GM12878 (cell line): ENCODE measurements at regions of chr5 and their contacts with region 1.

Region 1: GRCh38 chr5:103358305-103358995 is 99.9 kb downstream of the MACIR start:
- DNase-seq: no peak
- ATAC-seq: no peak
- H3K4me3 ChIP-seq: no peak overlapping the region
- H3K27ac ChIP-seq: no peak overlapping the region
- H3K4me1 ChIP-seq: peaks cover 11% of the 10 kb centered on the region; the same call in 1 of the 2 replicates
- H3K27me3 ChIP-seq: no peaks in the 10 kb centered on the region
- CTCF ChIP-seq: no peak
- EP300 ChIP-seq: no peak
- POLR2A ChIP-seq: no peak
- RAD21 ChIP-seq: no peak

Region 2: GRCh38 chr5:103346162-103346748 is 12.2 kb before region 1 on chr5:
- CTCF ChIA-PET with region 1: interaction called, 8 read pairs
- POLR2A ChIA-PET with region 1: interaction called, 3 read pairs
- RAD21 ChIA-PET with region 1: interaction called, 3 read pairs
- SMC1A ChIA-PET with region 1: interaction called, 10 read pairs
- in situ Hi-C with region 1: no loop called
- intact Hi-C with region 1: no loop called
- DNase-seq: no peak
- ATAC-seq: peak; percentile 49
- H3K4me3 ChIP-seq: no peak overlapping the region
- H3K27ac ChIP-seq: no peak overlapping the region
- H3K4me1 ChIP-seq: peaks cover 17% of the 10 kb centered on the region
- H3K27me3 ChIP-seq: no peaks in the 10 kb centered on the region
- CTCF ChIP-seq: no peak
- EP300 ChIP-seq: no peak
- POLR2A ChIP-seq: no peak
- RAD21 ChIP-seq: no peak